Aorta (tissue), 5 donors: ENCODE measurements at regions of chr5 and their contacts with region 1.

Region 1: GRCh38 chr5:133968049-133968980 is at the start of gene C5orf15:
- DNase-seq: peak; percentile 98 to 99
- ATAC-seq: peak; percentile 99
- H3K4me3 ChIP-seq: peak within 1 kb of the TSS; percentile 50 to 51
- H3K27ac ChIP-seq: peak within 1 kb of the TSS; percentile 76 to 86
- H3K4me1 ChIP-seq: peaks cover 0 to 2% of the 10 kb centered on the region in 2 donors
- H3K27me3 ChIP-seq: no peaks in the 10 kb centered on the region
- total RNA-seq, gene C5orf15: 32.3 to 34.4 TPM

Region 2: GRCh38 chr5:133952729-133953567 is 15.4 kb before region 1 on chr5:
- intact Hi-C with region 1: loop called in 1 of 2 experiments (anchors 1 kb)
- DNase-seq: peak; percentile 78 to 80
- ATAC-seq: peak; percentile 92
- H3K4me3 ChIP-seq: no peak overlapping the region
- H3K27ac ChIP-seq: peak overlapping the region; percentile 17 to 99
- H3K4me1 ChIP-seq: peaks cover 7 to 10% of the 10 kb centered on the region in 2 donors
- H3K27me3 ChIP-seq: no peaks in the 10 kb centered on the region

Region 3: GRCh38 chr5:134004592-134005375 is 36.5 kb after region 1 on chr5 and contains the start of gene VDAC1:
- intact Hi-C with region 1: loop called in 1 of 2 experiments (anchors 1 kb)
- DNase-seq: peak; percentile 93 to 94
- ATAC-seq: peak; percentile 91
- H3K4me3 ChIP-seq: peak within 1 kb of the TSS; percentile 68 to 92
- H3K27ac ChIP-seq: peak within 1 kb of the TSS; percentile 95 to 98
- H3K4me1 ChIP-seq: no peaks in the 10 kb centered on the region
- H3K27me3 ChIP-seq: no peaks in the 10 kb centered on the region
- total RNA-seq, gene VDAC1: 92.4 to 100 TPM